K562 (cell line): ENCODE measurements at regions of chr19 and their contacts with region 1.

Region 1: DNA sequence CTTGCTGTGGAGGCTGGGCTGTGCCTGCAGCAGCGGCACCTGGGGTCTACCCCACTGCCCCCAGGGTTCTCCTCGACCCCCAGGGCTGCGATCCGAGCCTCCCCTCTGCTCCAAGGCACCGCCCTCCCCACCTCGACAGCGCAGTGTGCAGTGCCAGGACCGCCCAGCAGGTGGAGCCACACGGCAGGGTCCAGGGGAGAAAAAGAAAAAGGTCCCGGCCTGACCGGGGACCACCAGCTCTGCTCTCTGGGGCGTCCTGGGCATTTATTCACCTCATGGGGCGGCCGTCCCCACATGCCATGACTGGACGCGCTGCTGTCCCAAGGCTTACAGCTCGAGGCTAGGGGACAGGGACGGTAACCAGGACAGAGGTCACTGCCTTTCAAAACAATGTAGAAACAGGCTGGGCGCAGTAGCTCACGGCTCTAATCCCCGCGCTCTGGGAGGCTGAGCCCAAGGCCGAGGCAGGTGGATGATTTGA is 10.6 kb downstream of the REXO1 start:
- DNase-seq: peak; percentile 68 to 83 (median 78)
- ATAC-seq: peak; percentile 71
- H3K4me3 ChIP-seq: peak overlapping the region; percentile 27
- H3K27ac ChIP-seq: peak overlapping the region; percentile 72
- H3K4me1 ChIP-seq: peaks cover 55 to 95% of the 10 kb centered on the region in 2 experiments
- H3K27me3 ChIP-seq: no peaks in the 10 kb centered on the region
- CTCF ChIP-seq: peak; percentile 86 to 95 (median 87)
- EP300 ChIP-seq: no peak
- POLR2A ChIP-seq: 0 out of 2 replicates have a peak, but pooled peaks have one; percentile 1
- RAD21 ChIP-seq: peak; percentile 62 to 74

Region 2: DNA sequence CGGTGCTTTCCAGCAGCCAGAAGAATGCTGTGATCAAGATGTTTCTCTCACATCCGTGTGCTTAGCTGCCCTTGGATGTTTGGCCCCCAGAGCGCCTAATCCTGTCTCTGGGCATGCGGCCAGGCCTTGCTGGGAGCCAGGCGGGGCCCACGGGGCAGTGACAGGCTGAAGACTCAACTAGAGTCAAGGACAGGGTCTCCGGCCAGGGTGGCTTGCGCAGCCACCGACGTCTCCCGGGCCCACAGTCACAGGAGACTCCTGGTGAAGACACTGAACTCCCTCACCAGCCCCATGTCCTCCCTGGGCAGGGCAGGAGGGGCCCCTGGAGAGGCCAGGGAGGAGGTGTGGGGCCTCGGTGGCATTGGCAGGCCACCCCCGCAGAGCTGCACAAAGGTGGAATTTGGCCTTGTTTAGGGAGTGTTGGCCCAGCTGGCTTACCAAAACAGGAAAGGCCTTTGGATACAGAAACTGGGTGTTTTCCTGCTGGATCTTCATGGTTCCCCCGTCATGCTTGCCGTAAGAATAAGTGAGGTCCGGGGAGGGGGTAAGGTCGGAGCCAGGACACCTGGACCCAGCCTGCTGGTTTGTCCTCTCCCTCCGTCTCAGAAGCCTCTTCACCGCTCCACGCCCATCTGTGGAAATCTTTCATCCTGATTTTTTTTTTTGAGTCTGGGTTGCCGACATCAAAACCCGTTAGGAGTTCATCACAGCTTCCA is 464.0 kb before region 1 on chr19:
- CTCF ChIA-PET with region 1: no interaction called
- POLR2A ChIA-PET with region 1: no interaction called
- in situ Hi-C with region 1: no loop called
- intact Hi-C with region 1: no loop called
- DNase-seq: no peak
- ATAC-seq: no peak
- H3K4me3 ChIP-seq: no peak overlapping the region
- H3K27ac ChIP-seq: no peak overlapping the region
- H3K4me1 ChIP-seq: peaks cover 0 to 50% of the 10 kb centered on the region in 2 experiments; a peak in 2 of 5 replicates
- H3K27me3 ChIP-seq: no peaks in the 10 kb centered on the region
- CTCF ChIP-seq: no peak
- EP300 ChIP-seq: no peak
- POLR2A ChIP-seq: no peak
- RAD21 ChIP-seq: no peak

Region 3: DNA sequence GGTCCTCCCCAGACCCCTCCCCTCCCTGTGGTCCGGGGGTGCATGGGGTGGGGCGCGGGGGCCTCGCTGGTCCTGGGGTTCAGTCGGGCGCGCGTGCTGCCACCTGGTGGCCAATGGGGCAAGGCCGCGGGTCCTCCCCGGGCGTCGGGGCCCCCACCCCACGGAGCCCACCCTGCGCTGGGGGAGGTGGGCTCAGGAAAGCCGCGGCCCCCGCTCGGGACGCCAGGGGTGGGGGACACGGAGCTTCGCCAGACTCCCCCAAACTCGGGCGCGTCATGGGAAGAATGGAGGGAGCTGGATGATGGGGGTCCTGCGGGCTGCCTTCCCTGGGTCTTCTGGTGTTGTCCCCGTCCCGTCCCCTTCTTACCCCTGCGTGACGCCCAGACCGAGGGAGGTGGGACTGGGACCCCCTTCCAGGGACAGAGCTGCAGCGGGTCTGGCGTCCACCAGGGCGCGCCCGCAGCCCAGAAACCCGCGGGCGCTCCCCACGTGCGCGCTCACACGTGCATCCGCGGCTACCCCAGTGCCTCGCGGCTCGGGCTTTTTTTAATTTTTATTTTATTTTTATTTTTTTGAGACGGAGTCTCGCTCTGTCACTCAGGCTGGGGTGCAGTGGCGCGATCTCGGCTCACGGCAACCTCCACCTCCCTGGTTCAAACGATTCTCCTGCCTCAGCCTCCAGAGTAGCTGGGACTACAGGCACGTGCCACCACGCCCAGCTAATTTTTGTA is 165.5 kb before region 1 on chr19:
- CTCF ChIA-PET with region 1: no interaction called
- POLR2A ChIA-PET with region 1: no interaction called
- in situ Hi-C with region 1: no loop called
- intact Hi-C with region 1: no loop called
- DNase-seq: peak; percentile 81 to 84 (median 83)
- ATAC-seq: peak; percentile 85
- H3K4me3 ChIP-seq: peak overlapping the region; percentile 51
- H3K27ac ChIP-seq: peak overlapping the region; percentile 81
- H3K4me1 ChIP-seq: peaks cover 17 to 76% of the 10 kb centered on the region in 2 experiments
- H3K27me3 ChIP-seq: no peaks in the 10 kb centered on the region
- CTCF ChIP-seq: peak; percentile 91 to 92 (median 91)
- EP300 ChIP-seq: no peak
- POLR2A ChIP-seq: no peak
- RAD21 ChIP-seq: peak; percentile 98 to 99

Region 4: GRCh38 chr19:1855040-1855827 is 17.6 kb after region 1 on chr19:
- CTCF ChIA-PET with region 1: no interaction called
- POLR2A ChIA-PET with region 1: interaction called, 46 read pairs
- in situ Hi-C with region 1: no loop called
- intact Hi-C with region 1: no loop called
- DNase-seq: peak; percentile 87 to 98 (median 92)
- ATAC-seq: peak; percentile 78
- H3K4me3 ChIP-seq: peak overlapping the region; percentile 57
- H3K27ac ChIP-seq: peak overlapping the region; percentile 90
- H3K4me1 ChIP-seq: peaks cover 65 to 97% of the 10 kb centered on the region in 2 experiments
- H3K27me3 ChIP-seq: no peaks in the 10 kb centered on the region
- CTCF ChIP-seq: no peak
- EP300 ChIP-seq: no peak
- POLR2A ChIP-seq: peak; percentile 71
- RAD21 ChIP-seq: no peak